ENCODE measurements at regions of chr12 and their contacts with region 1.

Region 1: GRCh38 chr12:112125250-112125999 is at the start of gene TRAFD1:
- DNase-seq: peak; percentile 99
- ATAC-seq: peak; percentile 99
- H3K4me3 Mint-ChIP-seq: peak within 1 kb of the TSS; percentile 78
- H3K27ac Mint-ChIP-seq: no peak within 1 kb of the TSS
- H3K4me1 Mint-ChIP-seq: peaks cover 27% of the 10 kb centered on the region
- H3K27me3 Mint-ChIP-seq: peaks cover 2% of the 10 kb centered on the region; the same call in 1 of the 2 replicates
- CTCF ChIP-seq: no peak
- total RNA-seq, gene TRAFD1: 24.8 to 25.8 TPM (median 25.1 TPM) in 3 replicates

Region 2: DNA sequence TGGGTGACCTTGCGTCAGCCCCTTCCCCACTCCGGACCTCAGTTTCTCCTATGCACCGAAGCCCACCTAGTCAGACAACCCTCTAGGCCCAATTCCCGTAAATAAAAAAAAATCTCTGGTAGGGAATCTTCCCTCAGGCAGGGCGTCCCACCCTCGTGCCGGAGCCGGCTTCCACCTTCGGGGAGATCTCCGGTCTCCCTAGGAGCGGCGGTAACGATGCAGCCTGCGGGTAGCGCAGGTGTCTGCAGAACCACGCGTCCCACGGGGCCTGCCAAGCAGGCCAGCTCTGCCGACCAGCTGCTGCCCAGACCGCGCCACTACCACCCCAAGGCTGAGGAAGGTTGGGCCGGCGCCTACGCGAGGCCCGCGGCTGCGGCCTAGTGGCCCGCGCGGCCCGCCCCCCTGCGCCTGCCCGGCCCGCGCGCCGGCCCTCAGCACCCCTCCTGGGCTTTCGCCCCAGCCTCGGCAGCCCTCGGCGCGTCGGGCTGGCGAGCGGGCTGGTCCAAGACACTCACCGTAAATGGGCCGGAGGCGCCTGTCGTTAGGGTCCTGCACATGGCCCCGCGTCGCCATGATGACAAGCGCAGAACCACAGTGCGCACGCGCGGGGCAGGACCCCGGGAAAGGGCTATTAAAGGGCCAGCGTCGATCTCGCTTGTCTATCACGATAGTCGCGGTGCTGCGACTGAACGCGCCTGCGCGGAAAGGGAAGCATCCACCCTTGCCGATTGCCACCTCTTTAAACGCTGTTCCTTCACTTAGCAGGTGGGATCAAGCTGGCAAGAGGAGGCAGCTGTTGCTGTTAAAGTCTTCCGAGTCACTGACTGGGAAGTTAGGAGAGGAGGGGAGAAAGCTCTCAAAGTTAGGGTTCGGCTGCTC is 17.0 kb before region 1 on chr12 and contains the start of gene NAA25:
- CTCF ChIA-PET with region 1: interaction called, 6 read pairs
- POLR2A ChIA-PET with region 1: interaction called, 24 read pairs
- DNase-seq: peak; percentile 92
- ATAC-seq: peak; percentile 74
- H3K4me3 Mint-ChIP-seq: peak within 1 kb of the TSS; percentile 94
- H3K27ac Mint-ChIP-seq: peak within 1 kb of the TSS; percentile 99
- H3K4me1 Mint-ChIP-seq: peaks cover 62% of the 10 kb centered on the region
- H3K27me3 Mint-ChIP-seq: no peaks in the 10 kb centered on the region
- CTCF ChIP-seq: no peak
- total RNA-seq, gene NAA25: 41.6 to 47.5 TPM (median 44.7 TPM) in 3 replicates

Measured in WTC11 (cell line).